ENCODE measurements at regions of chr2 and their contacts with region 1.

Region 1: DNA sequence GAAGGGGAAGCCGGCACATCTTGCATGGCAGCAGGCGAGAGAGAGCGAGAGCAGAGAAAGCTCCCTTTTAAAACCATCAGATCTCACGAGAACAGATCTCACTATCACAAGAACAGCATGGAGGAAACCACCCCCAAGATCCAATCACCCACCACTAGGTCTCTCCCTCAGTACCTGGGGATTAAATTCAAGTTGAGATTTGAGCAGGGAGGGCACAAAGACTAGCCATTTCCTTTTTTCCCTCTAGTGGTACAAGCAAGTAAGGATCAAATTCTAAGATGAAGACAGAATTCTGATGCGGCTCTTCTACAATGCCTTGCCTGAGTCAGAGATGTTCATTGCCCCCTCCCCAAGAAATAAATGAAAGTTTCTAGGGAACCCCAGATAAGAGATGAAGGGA is 45.6 kb upstream of the ANKRD44 start:
- DNase-seq: peak in 2 of 9 experiments; percentile 33 to 47
- ATAC-seq: peak; percentile 62
- H3K4me3 ChIP-seq: no peak overlapping the region
- H3K4me3 Mint-ChIP-seq: no peak overlapping the region
- H3K27ac ChIP-seq: no peak overlapping the region
- H3K27ac Mint-ChIP-seq: peak overlapping the region; percentile 28
- H3K4me1 ChIP-seq: peaks cover 15% of the 10 kb centered on the region
- H3K4me1 Mint-ChIP-seq: peaks cover 23% of the 10 kb centered on the region
- H3K27me3 ChIP-seq: no peaks in the 10 kb centered on the region
- H3K27me3 Mint-ChIP-seq: no peaks in the 10 kb centered on the region
- CTCF ChIP-seq: peak; percentile 50

Region 2: GRCh38 chr2:197327472-197328098 is 28.6 kb before region 1 on chr2:
- CTCF ChIA-PET with region 1: interaction called, 16 read pairs
- POLR2A ChIA-PET with region 1: no interaction called
- intact Hi-C with region 1: no loop called
- DNase-seq: peak in 2 of 9 experiments; percentile 40 to 59
- ATAC-seq: no peak
- H3K4me3 ChIP-seq: no peak overlapping the region
- H3K4me3 Mint-ChIP-seq: peak overlapping the region; percentile 66
- H3K27ac ChIP-seq: peak overlapping the region; percentile 3 to 33
- H3K27ac Mint-ChIP-seq: peak overlapping the region; percentile 81
- H3K4me1 ChIP-seq: peaks cover 67% of the 10 kb centered on the region
- H3K4me1 Mint-ChIP-seq: peaks cover 59% of the 10 kb centered on the region
- H3K27me3 ChIP-seq: no peaks in the 10 kb centered on the region
- H3K27me3 Mint-ChIP-seq: no peaks in the 10 kb centered on the region
- CTCF ChIP-seq: no peak

Region 3: GRCh38 chr2:197345846-197346370 is 10.2 kb before region 1 on chr2:
- CTCF ChIA-PET with region 1: interaction called, 11 read pairs
- POLR2A ChIA-PET with region 1: no interaction called
- intact Hi-C with region 1: no loop called
- DNase-seq: no peak
- ATAC-seq: no peak
- H3K4me3 ChIP-seq: no peak overlapping the region
- H3K4me3 Mint-ChIP-seq: no peak overlapping the region
- H3K27ac ChIP-seq: no peak overlapping the region
- H3K27ac Mint-ChIP-seq: no peak overlapping the region
- H3K4me1 ChIP-seq: no peaks in the 10 kb centered on the region
- H3K4me1 Mint-ChIP-seq: peaks cover 3% of the 10 kb centered on the region
- H3K27me3 ChIP-seq: no peaks in the 10 kb centered on the region
- H3K27me3 Mint-ChIP-seq: no peaks in the 10 kb centered on the region
- CTCF ChIP-seq: no peak

Region 4: GRCh38 chr2:197386242-197386641 is 30.1 kb after region 1 on chr2:
- CTCF ChIA-PET with region 1: no interaction called
- POLR2A ChIA-PET with region 1: no interaction called
- intact Hi-C with region 1: no loop called
- DNase-seq: no peak
- ATAC-seq: no peak
- H3K4me3 ChIP-seq: no peak overlapping the region
- H3K4me3 Mint-ChIP-seq: no peak overlapping the region
- H3K27ac ChIP-seq: no peak overlapping the region
- H3K27ac Mint-ChIP-seq: no peak overlapping the region
- H3K4me1 ChIP-seq: no peaks in the 10 kb centered on the region
- H3K4me1 Mint-ChIP-seq: no peaks in the 10 kb centered on the region
- H3K27me3 ChIP-seq: no peaks in the 10 kb centered on the region
- H3K27me3 Mint-ChIP-seq: no peaks in the 10 kb centered on the region
- CTCF ChIP-seq: no peak

Region 5: GRCh38 chr2:197464175-197464574 is 108.0 kb after region 1 on chr2:
- CTCF ChIA-PET with region 1: no interaction called
- POLR2A ChIA-PET with region 1: no interaction called
- intact Hi-C with region 1: no loop called
- DNase-seq: no peak
- ATAC-seq: no peak
- H3K4me3 ChIP-seq: no peak overlapping the region
- H3K4me3 Mint-ChIP-seq: no peak overlapping the region
- H3K27ac ChIP-seq: no peak overlapping the region
- H3K27ac Mint-ChIP-seq: no peak overlapping the region
- H3K4me1 ChIP-seq: no peaks in the 10 kb centered on the region
- H3K4me1 Mint-ChIP-seq: peaks cover 16% of the 10 kb centered on the region
- H3K27me3 ChIP-seq: no peaks in the 10 kb centered on the region
- H3K27me3 Mint-ChIP-seq: no peaks in the 10 kb centered on the region
- CTCF ChIP-seq: no peak

Region 6: GRCh38 chr2:197499594-197500526 is 143.7 kb after region 1 on chr2 and contains the starts of genes HSPD1 and HSPE1:
- CTCF ChIA-PET with region 1: no interaction called
- POLR2A ChIA-PET with region 1: no interaction called
- intact Hi-C with region 1: no loop called
- DNase-seq: peak; percentile 93 to 99 (median 97)
- ATAC-seq: peak; percentile 86
- H3K4me3 ChIP-seq: peak within 1 kb of the TSS; percentile 61 to 76
- H3K4me3 Mint-ChIP-seq: peak within 1 kb of the TSS; percentile 92
- H3K27ac ChIP-seq: peak within 1 kb of the TSS; percentile 96
- H3K27ac Mint-ChIP-seq: peak within 1 kb of the TSS; percentile 97
- H3K4me1 ChIP-seq: peaks cover 55% of the 10 kb centered on the region
- H3K4me1 Mint-ChIP-seq: peaks cover 62% of the 10 kb centered on the region
- H3K27me3 ChIP-seq: no peaks in the 10 kb centered on the region
- H3K27me3 Mint-ChIP-seq: no peaks in the 10 kb centered on the region
- CTCF ChIP-seq: no peak
- total RNA-seq, gene HSPD1: 162 to 163 TPM
- total RNA-seq, gene HSPE1: 76.7 to 76.8 TPM

Measured in CD8-positive, alpha-beta T cell (primary cell).